GM12878 (cell line): ENCODE measurements at regions of chr3 and their contacts with region 1.

Region 1: DNA sequence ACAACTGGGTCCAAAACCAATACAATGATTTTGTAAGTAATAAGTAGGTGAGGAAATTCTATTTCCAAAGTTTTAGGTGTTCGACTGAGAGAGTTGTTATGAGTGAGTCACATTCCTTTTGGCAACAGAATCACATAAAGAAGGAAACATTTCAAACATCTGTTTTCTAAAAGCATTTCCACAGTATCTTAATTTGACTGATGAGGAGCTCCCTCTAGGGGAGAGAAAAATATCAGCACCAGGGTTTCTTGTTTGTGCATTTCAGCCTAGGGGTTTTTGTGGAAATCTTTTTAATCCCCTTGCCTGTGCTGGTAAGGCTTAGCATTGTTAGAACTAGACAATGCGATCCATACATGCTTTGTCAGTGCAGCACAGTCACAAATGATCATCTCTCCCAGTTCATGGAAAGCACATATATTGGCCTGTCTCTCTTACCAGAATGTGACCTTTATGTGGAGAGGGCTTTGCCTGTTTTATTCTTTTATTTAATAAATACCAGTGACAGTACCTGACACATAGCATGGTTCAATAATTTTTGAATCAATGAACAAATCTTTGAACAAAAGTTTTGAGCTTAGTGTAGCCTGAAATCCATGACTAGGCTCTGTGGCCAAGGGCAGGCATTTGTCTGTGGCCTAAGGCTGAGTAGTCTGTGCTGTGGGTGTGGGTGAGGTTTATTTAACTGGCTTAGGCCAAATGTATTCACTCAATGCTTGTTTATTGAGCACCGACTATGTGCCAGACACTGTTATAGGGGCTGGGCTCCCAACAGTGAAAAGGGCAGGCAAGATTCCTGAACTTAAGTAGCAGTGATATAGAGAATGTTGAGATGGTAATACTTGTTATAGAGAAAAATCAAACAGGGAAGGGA is 21.1 kb upstream of the IQCF6 start:
- DNase-seq: peak; percentile 5
- ATAC-seq: peak; percentile 71
- H3K4me3 ChIP-seq: no peak overlapping the region
- H3K27ac ChIP-seq: no peak overlapping the region
- H3K4me1 ChIP-seq: no peaks in the 10 kb centered on the region
- H3K27me3 ChIP-seq: no peaks in the 10 kb centered on the region; a peak in 1 of 4 replicates
- CTCF ChIP-seq: peak; percentile 70 to 74 (median 73); a peak in 5 of 6 replicates
- EP300 ChIP-seq: no peak
- POLR2A ChIP-seq: no peak
- RAD21 ChIP-seq: peak; percentile 72

Region 2: DNA sequence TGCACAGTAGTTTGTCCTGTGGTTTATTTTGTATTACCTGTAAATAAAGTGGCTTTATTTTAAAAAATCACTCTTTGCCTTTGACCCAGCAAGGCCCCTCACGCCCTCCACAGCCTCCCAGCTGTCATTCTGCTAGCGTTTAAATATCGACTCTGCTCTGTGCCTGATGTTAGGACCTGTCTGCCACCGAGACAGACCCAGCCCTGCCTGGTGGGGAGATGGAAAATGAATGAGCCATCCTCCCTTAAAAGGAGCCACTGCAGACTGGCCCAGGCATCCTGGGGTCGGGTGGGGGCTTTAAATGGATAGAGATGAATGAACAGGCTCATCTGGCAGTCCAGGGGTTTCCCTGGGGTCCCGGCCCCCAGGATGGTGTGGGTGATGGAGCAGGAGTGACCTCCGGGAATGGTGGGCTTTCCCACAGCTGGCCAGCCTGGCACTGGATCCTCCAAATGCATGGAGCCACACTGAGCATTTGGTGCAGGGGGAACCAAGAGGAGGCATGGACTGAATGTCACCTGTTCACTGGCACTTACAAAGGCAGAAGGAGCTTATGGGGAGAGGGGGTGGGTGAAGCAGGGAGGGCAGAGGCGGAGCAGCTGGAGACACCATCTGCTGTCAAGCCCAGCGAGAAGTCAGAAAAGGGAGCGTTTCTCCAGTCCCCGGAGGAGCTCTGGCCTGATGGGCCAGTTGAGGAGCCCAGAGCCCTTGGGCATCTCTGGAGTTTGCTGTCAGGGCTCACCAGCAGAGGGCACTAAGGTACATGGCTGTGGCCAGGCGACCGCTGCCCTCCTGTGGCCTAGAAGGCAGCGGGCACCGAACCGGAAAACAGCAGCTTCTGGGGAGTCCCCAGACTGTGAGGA is 81.3 kb before region 1 on chr3:
- CTCF ChIA-PET with region 1: interaction called, 116 read pairs
- POLR2A ChIA-PET with region 1: no interaction called
- RAD21 ChIA-PET with region 1: interaction called, 47 read pairs
- SMC1A ChIA-PET with region 1: interaction called, 24 read pairs
- in situ Hi-C with region 1: no loop called
- intact Hi-C with region 1: loop called (anchors 1 kb)
- DNase-seq: peak; percentile 23
- ATAC-seq: peak; percentile 98
- H3K4me3 ChIP-seq: no peak overlapping the region
- H3K27ac ChIP-seq: no peak overlapping the region
- H3K4me1 ChIP-seq: no peaks in the 10 kb centered on the region
- H3K27me3 ChIP-seq: no peaks in the 10 kb centered on the region
- CTCF ChIP-seq: peak; percentile 71 to 96 (median 92)
- EP300 ChIP-seq: no peak
- POLR2A ChIP-seq: no peak
- RAD21 ChIP-seq: peak; percentile 32; the same call in 1 of the 2 replicates